ENCODE measurements at regions of chr17 and their contacts with region 1.

Region 1: GRCh38 chr17:2244545-2245525 is 58.8 kb downstream of the SMG6 start:
- DNase-seq: peak; percentile 91
- ATAC-seq: peak; percentile 82
- H3K4me3 Mint-ChIP-seq: no peak overlapping the region
- H3K27ac Mint-ChIP-seq: peak overlapping the region; percentile 82
- H3K4me1 Mint-ChIP-seq: peaks cover 82% of the 10 kb centered on the region
- H3K27me3 Mint-ChIP-seq: no peaks in the 10 kb centered on the region

Region 2: GRCh38 chr17:2083613-2084128 is 161.2 kb before region 1 on chr17:
- CTCF ChIA-PET with region 1: interaction called, 36 read pairs
- DNase-seq: peak; percentile 63
- ATAC-seq: peak; percentile 37
- H3K4me3 Mint-ChIP-seq: no peak overlapping the region
- H3K27ac Mint-ChIP-seq: peak overlapping the region; percentile 64
- H3K4me1 Mint-ChIP-seq: peaks cover 81% of the 10 kb centered on the region
- H3K27me3 Mint-ChIP-seq: no peaks in the 10 kb centered on the region

Region 3: DNA sequence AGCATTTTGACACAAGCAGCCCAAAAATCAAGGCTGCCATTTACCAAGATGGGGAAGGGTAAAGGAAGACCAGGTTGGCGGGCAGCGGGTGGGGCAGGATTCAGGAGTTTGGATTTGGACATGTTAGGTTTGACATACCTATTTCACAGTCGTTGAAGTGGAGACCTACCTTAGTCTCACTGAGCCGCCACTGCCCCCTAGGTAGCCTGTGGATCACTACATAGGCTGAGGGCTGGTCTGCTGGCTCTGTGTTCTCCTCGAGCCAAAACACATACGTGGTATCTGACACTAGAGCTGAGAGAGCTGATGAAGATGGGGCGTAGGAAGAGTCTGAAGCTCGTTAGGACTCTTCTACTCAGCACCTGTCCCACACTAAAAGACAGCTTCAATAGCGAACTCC is 74.8 kb before region 1 on chr17:
- CTCF ChIA-PET with region 1: interaction called, 10 read pairs
- DNase-seq: peak; percentile 51
- ATAC-seq: peak; percentile 70
- H3K4me3 Mint-ChIP-seq: no peak overlapping the region
- H3K27ac Mint-ChIP-seq: peak overlapping the region; percentile 15
- H3K4me1 Mint-ChIP-seq: peaks cover 18% of the 10 kb centered on the region
- H3K27me3 Mint-ChIP-seq: no peaks in the 10 kb centered on the region

Region 4: DNA sequence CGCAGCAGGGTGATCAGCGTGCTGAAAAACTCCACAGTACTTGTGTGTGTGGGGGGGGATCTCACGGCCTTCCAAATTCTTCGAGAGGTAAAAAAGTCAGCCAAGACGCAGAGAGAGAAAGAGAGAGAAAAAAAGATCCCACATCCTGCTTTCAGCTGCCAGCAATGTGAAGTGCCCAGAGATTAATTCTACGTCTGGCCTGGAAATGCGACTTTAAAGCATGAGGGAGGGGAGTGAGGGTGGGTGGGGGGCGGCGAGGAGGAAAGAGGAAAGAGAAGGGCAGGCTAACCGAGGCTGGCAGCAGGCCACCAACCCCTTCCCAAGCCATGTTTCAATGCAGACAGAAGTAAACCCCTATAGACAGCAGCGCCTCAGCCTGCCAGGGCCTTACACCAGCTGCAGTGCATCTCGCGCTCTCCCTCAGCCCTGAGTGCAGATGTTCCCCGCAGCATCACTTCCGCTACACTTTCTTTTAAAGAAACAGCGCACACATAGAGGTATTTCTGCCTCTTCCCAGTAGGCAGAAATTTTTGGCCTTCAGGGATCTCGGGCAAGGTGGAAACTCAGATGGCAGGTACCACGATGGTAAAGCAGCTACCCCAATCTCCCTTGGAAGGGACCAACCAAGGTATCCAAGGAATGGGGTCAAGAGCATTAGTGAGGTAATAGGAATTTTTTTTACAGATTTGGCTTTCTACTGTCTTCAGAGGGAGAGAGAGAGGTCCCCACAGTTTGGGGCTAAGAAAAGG is 29.0 kb before region 1 on chr17:
- CTCF ChIA-PET with region 1: interaction called, 13 read pairs
- DNase-seq: peak; percentile 89
- ATAC-seq: peak; percentile 99
- H3K4me3 Mint-ChIP-seq: peak overlapping the region; percentile 63
- H3K27ac Mint-ChIP-seq: peak overlapping the region; percentile 89
- H3K4me1 Mint-ChIP-seq: peaks cover 66% of the 10 kb centered on the region
- H3K27me3 Mint-ChIP-seq: no peaks in the 10 kb centered on the region

Region 5: DNA sequence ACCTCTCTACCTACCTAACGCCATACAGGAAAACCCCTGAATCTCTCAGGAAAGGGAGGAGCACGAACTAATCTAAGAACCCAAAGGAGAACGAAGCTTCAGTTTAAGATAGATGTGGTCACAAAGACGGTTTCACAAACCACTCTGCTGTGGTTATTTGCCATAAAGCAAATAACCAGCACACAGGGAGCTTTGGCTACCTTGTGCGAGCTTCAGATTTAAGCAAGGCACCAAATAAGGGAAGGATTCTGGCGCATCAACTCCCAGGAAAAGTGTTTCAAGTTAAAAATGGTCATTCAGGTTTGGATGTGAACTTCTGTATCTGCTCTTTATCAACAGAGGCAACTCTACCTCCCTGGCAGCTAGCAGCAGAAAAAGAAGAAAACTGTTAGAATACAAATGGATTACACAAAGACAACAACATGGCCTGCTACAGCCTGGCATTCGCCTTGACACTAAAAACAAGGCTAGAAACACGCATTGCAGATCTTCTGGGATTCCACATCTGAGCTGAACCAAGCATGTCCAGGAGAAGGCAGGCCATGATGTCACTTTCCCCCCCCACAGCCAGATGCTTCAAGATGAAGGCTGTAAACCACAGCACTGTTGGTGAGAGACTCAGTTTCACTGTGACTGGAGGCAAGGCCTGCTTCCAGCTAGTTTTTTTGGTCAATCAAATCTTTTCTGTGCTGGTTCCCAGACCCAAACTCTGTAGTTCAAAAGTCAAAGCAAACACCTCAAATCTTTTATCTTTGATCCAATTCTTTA is 15.1 kb after region 1 on chr17:
- CTCF ChIA-PET with region 1: interaction called, 76 read pairs
- DNase-seq: peak; percentile 94
- ATAC-seq: peak; percentile 83
- H3K4me3 Mint-ChIP-seq: peak overlapping the region; percentile 81
- H3K27ac Mint-ChIP-seq: peak overlapping the region; percentile 99
- H3K4me1 Mint-ChIP-seq: peaks cover 82% of the 10 kb centered on the region
- H3K27me3 Mint-ChIP-seq: no peaks in the 10 kb centered on the region

Region 6: GRCh38 chr17:2282297-2282873 is 37.5 kb after region 1 on chr17:
- CTCF ChIA-PET with region 1: interaction called, 52 read pairs
- DNase-seq: no peak
- ATAC-seq: peak; percentile 39
- H3K4me3 Mint-ChIP-seq: no peak overlapping the region
- H3K27ac Mint-ChIP-seq: peak overlapping the region; percentile 72
- H3K4me1 Mint-ChIP-seq: peaks cover 38% of the 10 kb centered on the region
- H3K27me3 Mint-ChIP-seq: no peaks in the 10 kb centered on the region

Measured in activated CD8-positive, alpha-beta memory T cell treated with anti-CD3 and anti-CD28 coated beads, Interleukin-2, amount 10 ng/mL, durations not matched to agents 7 days and 5 days (primary cell).